Heart right ventricle (tissue), 16 donors: ENCODE measurements at regions of chr1 and their contacts with region 1.

Region 1: GRCh38 chr1:33367485-33368405 is 46.8 kb upstream of the A3GALT2 start:
- DNase-seq: peak; percentile 88 to 90
- ATAC-seq: peak; percentile 65 to 81 (median 74)
- H3K4me3 ChIP-seq: no peak overlapping the region
- H3K27ac ChIP-seq: peak overlapping the region in 9 of 10 donors; percentile 48 to 88 (median 80)
- H3K4me1 ChIP-seq: peaks cover 35 to 73% (median 54%) of the 10 kb centered on the region in 9 donors
- H3K27me3 ChIP-seq: no peaks in the 10 kb centered on the region
- CTCF ChIP-seq: peak; percentile 96 to 99 (median 97)

Region 2: DNA sequence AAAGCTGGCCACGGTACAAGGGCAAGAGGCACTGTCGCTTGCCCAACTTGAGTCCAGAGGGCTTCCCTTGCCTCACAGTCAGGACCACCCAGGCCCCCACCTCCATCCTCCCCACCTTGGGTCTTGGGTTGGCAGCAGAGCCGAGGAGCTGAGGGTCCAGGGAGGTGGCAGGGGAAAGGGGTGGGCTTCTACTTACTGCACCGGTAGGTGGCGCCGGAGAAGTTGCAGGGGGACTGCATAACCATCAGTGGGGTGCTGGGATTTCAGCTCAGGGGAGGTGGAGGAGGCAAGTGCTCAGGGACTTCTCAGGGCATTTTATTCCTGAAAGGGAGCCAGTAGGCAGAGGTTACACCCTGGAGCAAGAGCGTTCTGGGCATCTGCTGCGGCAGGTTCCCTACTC is 229.9 kb before region 1 on chr1:
- intact Hi-C with region 1: loop called in 5 of 10 experiments (anchors 5 to 10 kb)
- DNase-seq: peak; percentile 30 to 58
- ATAC-seq: peak in 4 of 8 donors; percentile 36 to 61 (median 50)
- H3K4me3 ChIP-seq: no peak overlapping the region
- H3K27ac ChIP-seq: no peak overlapping the region
- H3K4me1 ChIP-seq: peaks cover 0 to 14% (median 2%) of the 10 kb centered on the region in 9 donors
- H3K27me3 ChIP-seq: no peaks in the 10 kb centered on the region
- CTCF ChIP-seq: peak in 8 of 9 donors; percentile 36 to 67 (median 58)

Region 3: DNA sequence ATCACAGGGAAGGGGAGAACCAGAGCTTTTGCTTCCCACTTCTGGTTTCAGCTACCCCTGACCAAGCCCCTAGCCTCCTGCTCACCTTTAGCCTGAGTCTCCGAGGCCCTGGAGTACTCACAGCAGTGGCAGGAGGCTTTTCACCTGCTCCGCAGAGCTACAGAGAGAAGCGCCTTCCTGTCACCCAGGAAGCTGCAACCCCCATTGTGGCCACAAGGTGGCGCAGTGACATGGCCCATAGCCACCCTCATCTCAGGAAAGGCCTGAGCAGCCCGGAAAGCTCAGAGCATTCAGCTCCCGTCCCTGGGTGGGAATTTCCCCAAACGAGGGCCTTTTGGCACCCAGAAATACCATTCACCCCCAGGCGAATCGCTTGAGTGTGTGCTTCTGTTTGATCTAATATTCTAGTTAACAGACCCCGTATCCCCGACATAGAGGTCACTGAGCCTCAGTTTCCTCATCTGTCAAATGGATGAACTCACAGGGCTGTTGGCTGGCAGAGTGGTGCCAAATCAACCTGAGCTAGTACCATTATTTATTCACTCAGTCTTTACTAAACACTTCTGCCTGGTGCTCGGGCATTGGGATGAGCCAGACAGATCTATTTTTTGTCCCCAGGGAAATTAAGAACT is 72.2 kb before region 1 on chr1:
- intact Hi-C with region 1: loop called (anchors 1 to 5 kb)
- DNase-seq: peak; percentile 85 to 89
- ATAC-seq: peak; percentile 73 to 93 (median 84)
- H3K4me3 ChIP-seq: no peak overlapping the region
- H3K27ac ChIP-seq: peak overlapping the region in 4 of 10 donors; percentile 13 to 24 (median 15)
- H3K4me1 ChIP-seq: peaks cover 0 to 27% (median 17%) of the 10 kb centered on the region in 9 donors
- H3K27me3 ChIP-seq: no peaks in the 10 kb centered on the region
- CTCF ChIP-seq: peak; percentile 88 to 99 (median 96)

Region 4: GRCh38 chr1:33349778-33350610 is 17.8 kb before region 1 on chr1:
- intact Hi-C with region 1: loop called in 2 of 10 experiments (anchors 2 kb)
- DNase-seq: peak; percentile 85 to 90
- ATAC-seq: peak; percentile 90 to 93 (median 92)
- H3K4me3 ChIP-seq: peak overlapping the region; percentile 33 to 96 (median 66)
- H3K27ac ChIP-seq: peak overlapping the region; percentile 87 to 100 (median 99)
- H3K4me1 ChIP-seq: peaks cover 11 to 48% (median 41%) of the 10 kb centered on the region in 9 donors
- H3K27me3 ChIP-seq: no peaks in the 10 kb centered on the region
- CTCF ChIP-seq: peak in 1 of 9 donors; percentile 26

Region 5: DNA sequence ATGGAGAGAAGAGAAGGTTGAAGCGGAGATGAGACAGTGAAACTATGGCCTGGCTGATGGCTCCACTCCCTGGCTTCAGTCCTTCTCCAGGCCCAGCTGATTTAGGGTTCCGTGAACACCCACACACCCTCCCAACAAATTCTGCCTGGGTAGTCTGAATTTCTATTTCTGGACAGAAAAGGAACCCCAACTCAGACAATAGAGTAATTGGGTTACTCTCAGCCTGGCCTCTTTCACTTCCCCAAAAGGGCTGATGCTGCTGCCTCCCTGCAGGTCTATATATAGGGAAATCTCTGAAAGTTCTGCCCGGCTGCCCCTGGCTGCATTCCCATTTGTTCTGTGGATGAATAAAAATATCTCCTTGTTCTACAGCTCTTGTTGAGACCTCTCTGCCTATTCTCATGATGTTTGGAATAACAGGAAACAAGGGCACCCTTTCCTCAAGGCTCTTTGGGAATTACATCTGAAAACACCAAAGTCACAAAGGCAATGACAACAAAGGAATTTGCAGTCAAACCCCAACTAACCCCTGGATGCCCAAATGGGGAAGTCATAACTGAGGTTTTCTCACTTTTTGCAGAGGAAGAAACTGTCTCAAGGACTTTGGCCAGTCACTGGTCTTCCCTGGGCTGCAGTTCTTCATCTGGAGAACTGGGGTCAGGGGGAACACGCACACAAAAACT is 93.3 kb after region 1 on chr1:
- intact Hi-C with region 1: loop called (anchors 5 to 10 kb)
- DNase-seq: peak; percentile 44 to 77
- ATAC-seq: peak; percentile 61 to 87 (median 75)
- H3K4me3 ChIP-seq: no peak overlapping the region
- H3K27ac ChIP-seq: peak overlapping the region; percentile 59 to 93 (median 84)
- H3K4me1 ChIP-seq: peaks cover 2 to 74% (median 35%) of the 10 kb centered on the region in 9 donors
- H3K27me3 ChIP-seq: no peaks in the 10 kb centered on the region
- CTCF ChIP-seq: no peak

Region 6: DNA sequence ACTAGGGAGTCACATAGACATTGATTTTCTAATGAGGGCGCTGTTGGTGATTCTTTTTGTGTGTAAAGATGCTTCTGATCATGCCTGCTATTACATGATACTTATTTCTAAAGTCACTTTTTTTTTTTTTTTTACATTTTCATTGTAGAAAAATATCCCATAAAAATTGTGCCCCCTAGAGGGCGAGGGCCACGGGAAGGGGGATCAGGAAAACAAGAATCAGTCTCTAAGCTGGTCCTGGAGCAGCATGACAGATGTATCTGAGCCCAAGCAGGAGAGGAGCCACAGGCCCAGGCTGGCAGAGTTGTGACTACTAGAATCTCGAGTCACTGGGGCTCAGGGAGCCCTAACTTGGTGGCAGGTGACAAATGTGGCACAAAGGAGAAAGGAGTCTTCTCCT is 132.8 kb after region 1 on chr1:
- intact Hi-C with region 1: no loop called
- DNase-seq: no peak
- ATAC-seq: no peak
- H3K4me3 ChIP-seq: no peak overlapping the region
- H3K27ac ChIP-seq: no peak overlapping the region
- H3K4me1 ChIP-seq: no peaks in the 10 kb centered on the region
- H3K27me3 ChIP-seq: no peaks in the 10 kb centered on the region
- CTCF ChIP-seq: peak in 1 of 9 donors; percentile 19

Region 7: DNA sequence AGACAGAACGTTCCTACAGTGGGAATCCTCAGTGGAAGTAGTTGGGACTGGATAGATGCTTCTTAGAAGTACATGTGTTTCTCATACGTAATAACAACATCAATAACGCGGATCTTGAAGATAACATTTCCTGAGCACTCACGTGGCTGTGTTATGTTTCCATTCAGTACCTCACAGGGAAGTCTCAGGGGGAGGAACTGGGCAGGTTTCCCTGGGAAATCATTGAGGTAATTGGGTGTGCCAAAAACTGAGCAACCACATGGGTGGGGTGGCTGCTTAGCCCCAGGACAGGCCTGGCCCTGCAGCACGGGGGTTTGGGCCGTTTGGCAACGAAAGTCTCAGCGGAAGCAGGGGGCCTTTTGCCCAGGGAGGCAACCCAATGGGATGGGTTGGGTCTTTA is 238.5 kb after region 1 on chr1:
- intact Hi-C with region 1: loop called in 5 of 10 experiments (anchors 5 to 10 kb)
- DNase-seq: peak; percentile 33 to 75
- ATAC-seq: peak; percentile 56 to 93 (median 76)
- H3K4me3 ChIP-seq: no peak overlapping the region
- H3K27ac ChIP-seq: peak overlapping the region in 8 of 10 donors; percentile 29 to 79 (median 69)
- H3K4me1 ChIP-seq: peaks cover 0 to 44% (median 13%) of the 10 kb centered on the region in 9 donors
- H3K27me3 ChIP-seq: no peaks in the 10 kb centered on the region
- CTCF ChIP-seq: no peak